Activated CD4-positive, alpha-beta memory T cell treated with anti-CD3 and anti-CD28 coated beads for 36 hours (primary cell): ENCODE measurements at regions of chr11 and their contacts with region 1.

Region 1: DNA sequence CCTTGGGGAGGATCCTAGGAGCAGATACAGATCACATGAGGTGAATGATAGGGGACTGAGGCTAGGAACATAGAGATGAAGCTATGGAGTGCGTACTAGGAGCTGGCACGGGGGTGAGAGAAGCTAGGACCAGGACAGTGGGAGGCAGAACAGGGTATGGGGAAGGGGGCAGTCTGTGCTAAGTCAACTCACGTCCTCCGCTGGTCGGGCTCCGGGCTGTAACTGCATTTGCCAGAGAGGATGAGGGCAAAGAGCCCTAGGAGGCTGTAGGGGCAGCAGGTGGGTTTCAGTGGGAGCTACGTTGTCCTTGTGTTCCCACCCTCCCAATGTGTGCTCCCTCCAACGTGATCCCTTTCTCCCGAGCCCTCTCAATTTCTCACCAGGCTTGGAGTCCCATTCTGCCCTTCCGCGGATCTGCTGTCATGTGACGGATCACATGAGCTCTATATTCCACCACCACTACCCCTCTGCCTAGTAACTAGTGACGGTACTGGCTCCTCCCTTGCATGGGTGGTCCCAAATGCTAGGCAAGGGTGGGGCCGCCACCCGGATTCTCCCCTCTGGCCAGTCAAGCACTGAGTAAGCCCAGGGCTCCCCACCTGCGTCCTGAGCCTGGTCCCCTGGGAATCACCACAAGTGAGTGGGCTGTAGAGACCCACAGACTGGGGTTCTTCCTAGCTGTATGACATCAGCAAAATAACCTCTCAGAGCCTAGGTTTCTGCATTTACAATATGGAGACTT is at the start of gene TPP1:
- DNase-seq: peak; percentile 93
- H3K4me3 Mint-ChIP-seq: no peak within 1 kb of the TSS
- H3K27ac Mint-ChIP-seq: no peak within 1 kb of the TSS
- H3K4me1 Mint-ChIP-seq: peaks cover 10% of the 10 kb centered on the region
- H3K27me3 Mint-ChIP-seq: no peaks in the 10 kb centered on the region
- total RNA-seq, gene TPP1: 53.2 to 56.6 TPM

Region 2: DNA sequence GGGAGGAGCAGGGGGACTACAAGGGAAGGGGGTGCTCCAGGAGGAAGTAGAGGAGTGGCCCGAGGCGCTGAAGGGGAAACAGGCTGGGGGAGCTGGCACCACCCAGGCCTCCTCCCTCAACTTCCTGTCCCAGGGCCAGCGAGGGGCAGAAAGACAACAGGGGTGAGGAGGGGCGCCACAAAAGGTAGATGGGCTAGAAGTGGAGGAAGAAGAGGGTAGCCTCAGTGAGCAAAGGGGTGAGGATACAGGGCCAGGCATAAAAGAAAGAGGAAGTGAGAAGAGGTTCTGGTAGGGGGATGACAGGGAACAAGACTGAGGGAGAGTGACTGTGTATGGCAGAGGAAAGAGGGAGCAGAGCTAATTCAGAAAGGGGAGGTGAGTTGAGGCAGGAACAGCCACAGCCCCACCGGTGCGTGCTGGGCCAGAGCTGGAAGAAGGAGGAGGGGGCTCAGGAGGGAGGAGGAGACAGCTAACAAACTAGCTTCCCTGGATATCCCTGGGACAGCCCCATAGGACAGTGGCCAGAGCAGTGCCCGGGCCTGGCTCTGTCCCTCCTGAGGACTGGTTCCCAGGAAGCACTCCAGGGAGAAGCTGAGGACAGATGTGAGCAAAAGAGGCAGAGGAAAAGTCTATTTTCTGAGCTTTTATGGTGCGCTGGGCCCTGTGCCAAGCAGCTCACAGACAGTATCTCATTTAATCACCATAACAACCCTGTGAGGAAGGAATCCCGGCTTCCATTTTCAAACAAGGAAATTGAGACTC is 27.9 kb after region 1 on chr11:
- CTCF ChIA-PET with region 1: interaction called, 3 read pairs
- POLR2A ChIA-PET with region 1: interaction called, 6 read pairs
- intact Hi-C with region 1: loop called (anchors 2 kb)
- DNase-seq: peak; percentile 49
- H3K4me3 Mint-ChIP-seq: no peak overlapping the region
- H3K27ac Mint-ChIP-seq: no peak overlapping the region
- H3K4me1 Mint-ChIP-seq: no peaks in the 10 kb centered on the region
- H3K27me3 Mint-ChIP-seq: no peaks in the 10 kb centered on the region